ENCODE measurements at regions of chr12 and their contacts with region 1.

Region 1: GRCh38 chr12:118372541-118373495 is at the start of gene TAOK3:
- DNase-seq: peak; percentile 98
- H3K4me3 ChIP-seq: peak within 1 kb of the TSS; percentile 98
- H3K27ac ChIP-seq: peak within 1 kb of the TSS; percentile 95
- H3K4me1 ChIP-seq: peaks cover 75% of the 10 kb centered on the region
- H3K27me3 ChIP-seq: no peaks in the 10 kb centered on the region
- CTCF ChIP-seq: no peak
- total RNA-seq, gene TAOK3: 21.4 TPM

Region 2: DNA sequence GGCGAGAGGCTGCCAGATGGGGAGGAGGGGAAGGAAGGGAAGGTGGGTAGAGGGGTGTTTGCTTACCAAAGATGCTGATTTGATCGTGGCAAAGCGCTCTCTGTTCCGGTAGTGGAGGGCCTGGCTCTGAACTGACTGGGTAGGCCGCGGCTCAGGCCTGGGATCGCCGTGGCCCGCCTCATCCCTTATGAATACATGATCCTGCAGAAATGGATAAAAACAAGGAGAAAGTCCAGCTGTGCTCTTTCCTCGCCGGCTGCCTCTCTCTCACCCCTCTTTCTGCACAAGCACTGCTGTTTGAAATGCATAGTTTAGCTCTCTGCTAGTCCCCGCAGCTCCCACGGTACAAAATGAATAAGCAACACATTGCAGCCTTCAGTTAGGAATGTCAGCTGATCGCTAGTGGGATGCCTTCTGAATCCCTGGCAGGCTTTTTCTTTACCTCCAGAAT is 183.1 kb before region 1 on chr12:
- intact Hi-C with region 1: loop called (anchors 5 kb)
- DNase-seq: peak; percentile 19
- H3K4me3 ChIP-seq: peak overlapping the region; percentile 68
- H3K27ac ChIP-seq: peak overlapping the region; percentile 83
- H3K4me1 ChIP-seq: peaks cover 63% of the 10 kb centered on the region
- H3K27me3 ChIP-seq: no peaks in the 10 kb centered on the region
- CTCF ChIP-seq: no peak

Region 3: GRCh38 chr12:118689793-118690192 is 317.0 kb after region 1 on chr12:
- intact Hi-C with region 1: no loop called
- DNase-seq: no peak
- H3K4me3 ChIP-seq: no peak overlapping the region
- H3K27ac ChIP-seq: no peak overlapping the region
- H3K4me1 ChIP-seq: no peaks in the 10 kb centered on the region
- H3K27me3 ChIP-seq: peaks cover 6% of the 10 kb centered on the region
- CTCF ChIP-seq: no peak

Measured in left ventricle myocardium inferior (tissue), 1 donor.